ENCODE measurements at regions of chr15 and their contacts with region 1.

Region 1: GRCh38 chr15:60444289-60444912 is 34.5 kb downstream of the ICE2 start:
- DNase-seq: no peak
- H3K4me3 ChIP-seq: no peak overlapping the region
- H3K27ac ChIP-seq: no peak overlapping the region
- H3K4me1 ChIP-seq: no peaks in the 10 kb centered on the region
- H3K27me3 ChIP-seq: no peaks in the 10 kb centered on the region
- CTCF ChIP-seq: peak in 2 of 3 donors; percentile 14 to 54
- EP300 ChIP-seq: no peak
- POLR2A ChIP-seq: no peak

Region 2: DNA sequence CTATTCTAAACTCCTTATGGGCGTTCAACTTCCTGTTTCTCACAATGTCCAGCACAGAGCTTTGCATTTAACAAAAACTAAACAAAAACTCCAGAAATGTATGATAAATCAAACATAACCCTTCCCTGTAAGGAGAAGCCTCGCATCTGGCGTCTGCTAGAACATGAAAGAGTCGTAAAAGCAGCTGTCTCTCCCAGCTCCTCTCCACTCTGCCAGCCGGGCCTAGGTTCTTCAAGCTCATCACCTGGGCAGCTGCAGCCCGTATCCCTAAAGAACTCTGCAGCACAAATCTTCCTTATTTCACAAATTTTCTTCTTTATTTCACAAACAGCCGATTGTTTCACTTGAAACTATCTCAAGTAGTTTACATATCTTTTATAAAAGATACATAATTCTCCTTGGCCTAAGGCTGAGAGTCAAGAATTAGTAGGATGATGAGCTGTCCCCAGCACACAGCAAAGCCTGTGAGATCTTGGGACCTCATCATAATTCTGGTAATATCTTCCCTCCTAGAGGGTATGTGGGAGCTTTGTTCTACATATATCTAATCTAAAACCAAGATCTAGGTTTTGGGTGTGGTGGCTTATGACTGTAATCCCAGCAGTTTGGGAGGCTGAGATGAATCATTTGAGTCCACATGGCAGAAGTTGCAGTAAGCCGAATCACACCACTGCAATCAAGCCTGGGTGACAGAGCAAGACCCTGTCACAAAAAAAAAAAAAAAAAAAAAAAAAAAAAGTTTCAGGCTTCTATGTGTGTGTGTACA is 81.9 kb before region 1 on chr15:
- intact Hi-C with region 1: loop called in 3 of 4 experiments (anchors 5 to 10 kb)
- DNase-seq: no peak
- H3K4me3 ChIP-seq: no peak overlapping the region
- H3K27ac ChIP-seq: peak overlapping the region in 1 of 2 donors; percentile 2
- H3K4me1 ChIP-seq: peaks cover 2% of the 10 kb centered on the region
- H3K27me3 ChIP-seq: no peaks in the 10 kb centered on the region
- CTCF ChIP-seq: no peak
- EP300 ChIP-seq: no peak
- POLR2A ChIP-seq: no peak

Region 3: GRCh38 chr15:60374628-60375081 is 69.7 kb before region 1 on chr15:
- intact Hi-C with region 1: loop called in 1 of 4 experiments (anchors 5 kb)
- DNase-seq: no peak
- H3K4me3 ChIP-seq: no peak overlapping the region
- H3K27ac ChIP-seq: no peak overlapping the region
- H3K4me1 ChIP-seq: peaks cover 12% of the 10 kb centered on the region
- H3K27me3 ChIP-seq: no peaks in the 10 kb centered on the region
- CTCF ChIP-seq: no peak
- EP300 ChIP-seq: no peak
- POLR2A ChIP-seq: no peak

Region 4: GRCh38 chr15:60485365-60486055 is 41.1 kb after region 1 on chr15:
- intact Hi-C with region 1: no loop called
- DNase-seq: no peak
- H3K4me3 ChIP-seq: no peak overlapping the region
- H3K27ac ChIP-seq: no peak overlapping the region
- H3K4me1 ChIP-seq: no peaks in the 10 kb centered on the region
- H3K27me3 ChIP-seq: no peaks in the 10 kb centered on the region
- CTCF ChIP-seq: no peak
- EP300 ChIP-seq: no peak
- POLR2A ChIP-seq: no peak

Region 5: GRCh38 chr15:60568301-60568742 is 123.9 kb after region 1 on chr15:
- intact Hi-C with region 1: no loop called
- DNase-seq: no peak
- H3K4me3 ChIP-seq: no peak overlapping the region
- H3K27ac ChIP-seq: no peak overlapping the region
- H3K4me1 ChIP-seq: no peaks in the 10 kb centered on the region
- H3K27me3 ChIP-seq: no peaks in the 10 kb centered on the region
- CTCF ChIP-seq: no peak
- EP300 ChIP-seq: no peak
- POLR2A ChIP-seq: no peak

Measured in ovary (tissue), 10 donors.